Activated T-helper 1 cell treated with anti-CD3 and anti-CD28 coated beads, Interleukin-12 subunit alpha, Interleukin-12 subunit beta, Interleukin-2, Interleukin-4 antibody, amounts not matched to agents 30 ng/mL and 10 ng/mL and 1 ng/mL, durations not matched to agents 14 hours and 24 hours and 36 hours (primary cell): ENCODE measurements at regions of chr5 and their contacts with region 1.

Region 1: DNA sequence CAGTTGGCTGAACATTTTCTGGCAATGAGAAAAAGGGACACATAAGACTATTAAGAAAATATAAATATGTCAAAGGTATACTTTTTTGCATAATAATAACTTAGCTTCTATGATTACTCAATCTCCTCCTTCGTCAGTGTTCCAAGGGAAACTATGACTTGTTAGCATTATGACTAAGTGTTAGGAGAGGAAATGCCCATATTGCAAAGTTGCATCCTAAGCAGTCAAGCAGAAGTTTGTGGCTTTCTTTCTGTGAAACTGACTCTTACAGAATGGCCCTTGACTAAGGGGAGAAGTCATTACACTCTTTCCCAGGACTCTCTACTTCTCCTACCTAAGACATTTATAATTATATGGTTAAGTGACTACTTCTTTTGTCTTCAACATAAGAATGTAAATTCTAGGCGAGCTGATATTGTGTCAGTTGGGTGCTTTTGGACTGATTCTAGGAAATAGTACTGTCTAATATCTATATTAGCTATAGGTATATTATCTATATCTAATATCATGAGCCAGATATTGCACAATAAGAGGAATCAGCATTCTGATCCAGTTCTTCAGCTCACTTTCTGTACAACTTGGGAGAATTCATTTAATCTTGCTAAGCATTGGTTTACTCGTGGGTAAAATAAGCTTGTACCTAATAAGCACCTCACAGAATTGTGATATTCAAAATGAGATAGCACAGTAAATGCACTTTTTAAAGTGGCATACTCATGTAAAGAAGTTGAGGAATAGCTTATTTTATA is 16.4 kb upstream of the SPINK6 start:
- DNase-seq: no peak
- H3K4me3 Mint-ChIP-seq: peak overlapping the region; percentile 7
- H3K27ac Mint-ChIP-seq: peak overlapping the region; percentile 52
- H3K4me1 Mint-ChIP-seq: peaks cover 24% of the 10 kb centered on the region
- H3K27me3 Mint-ChIP-seq: no peaks in the 10 kb centered on the region

Region 2: GRCh38 chr5:148237785-148238184 is 51.4 kb after region 1 on chr5:
- intact Hi-C with region 1: no loop called
- DNase-seq: no peak
- H3K4me3 Mint-ChIP-seq: no peak overlapping the region
- H3K27ac Mint-ChIP-seq: no peak overlapping the region
- H3K4me1 Mint-ChIP-seq: no peaks in the 10 kb centered on the region
- H3K27me3 Mint-ChIP-seq: no peaks in the 10 kb centered on the region

Region 3: DNA sequence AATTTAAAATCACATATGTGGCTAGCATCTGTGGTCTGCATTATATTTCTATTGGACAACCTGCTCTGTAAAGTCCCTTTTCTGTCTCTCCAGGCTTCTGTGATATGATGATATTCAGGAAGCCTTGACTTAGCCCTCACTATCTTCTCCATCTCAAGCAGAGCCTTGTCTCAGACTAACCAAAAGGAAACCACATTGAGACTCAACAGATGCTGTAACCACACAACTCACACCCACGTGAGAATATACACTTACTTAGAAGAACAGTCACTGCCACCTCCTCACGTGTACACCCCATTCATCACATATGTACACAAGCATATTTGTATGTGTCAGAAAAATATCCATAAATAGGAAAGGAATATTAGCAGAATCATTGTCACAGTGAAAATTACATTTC is 434.3 kb after region 1 on chr5:
- intact Hi-C with region 1: loop called (anchors 1 kb)
- DNase-seq: peak; percentile 48
- H3K4me3 Mint-ChIP-seq: no peak overlapping the region
- H3K27ac Mint-ChIP-seq: peak overlapping the region; percentile 28
- H3K4me1 Mint-ChIP-seq: peaks cover 36% of the 10 kb centered on the region
- H3K27me3 Mint-ChIP-seq: peaks cover 24% of the 10 kb centered on the region